Heart left ventricle (tissue), 16 donors: ENCODE measurements at regions of chr14 and their contacts with region 1.

Region 1: DNA sequence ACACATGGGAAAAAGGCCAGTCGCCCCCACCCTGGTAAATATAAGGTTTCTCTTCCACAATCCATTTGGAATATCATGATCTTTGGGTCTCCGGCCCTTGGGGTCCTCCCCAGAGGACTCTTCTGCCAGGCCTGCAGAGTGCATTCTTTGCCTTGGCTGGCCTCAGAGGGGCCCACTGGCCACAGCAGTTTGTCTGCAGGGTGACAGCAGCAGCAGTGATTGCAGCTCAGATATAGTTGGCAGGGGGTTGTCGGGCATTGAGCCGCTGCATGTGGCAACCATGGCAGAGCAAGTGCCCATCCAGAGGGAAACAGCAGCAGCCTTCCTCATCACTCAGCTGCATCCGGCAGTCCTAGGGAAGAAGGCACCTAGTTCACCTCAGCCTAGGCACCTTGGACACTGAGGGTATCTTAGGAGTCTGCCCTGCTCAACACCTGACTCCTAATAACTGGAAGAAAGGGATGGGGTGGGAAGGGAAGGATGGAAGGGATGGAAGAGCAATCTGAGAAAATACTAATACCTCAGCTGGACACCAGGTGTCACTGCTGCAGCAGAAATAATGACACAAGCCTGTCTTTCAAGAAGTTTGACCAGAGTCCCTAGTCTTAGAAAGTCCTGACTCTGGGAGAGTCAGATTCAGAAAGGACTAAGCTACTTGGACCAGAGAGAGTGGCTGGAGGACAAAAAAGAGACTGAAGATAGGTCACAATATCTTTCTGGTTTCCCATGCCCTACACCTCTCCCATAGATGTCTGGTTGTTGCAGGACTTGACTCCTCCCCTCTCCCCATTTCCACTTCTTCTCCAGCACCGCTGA is 8.9 kb downstream of the AJUBA start:
- DNase-seq: peak in 2 of 5 donors; percentile 37 to 43
- ATAC-seq: peak; percentile 5 to 57 (median 42)
- H3K4me3 ChIP-seq: no peak overlapping the region
- H3K27ac ChIP-seq: peak overlapping the region in 5 of 12 donors; percentile 5 to 55 (median 27)
- H3K4me1 ChIP-seq: peaks cover 3 to 30% (median 20%) of the 10 kb centered on the region in 12 donors
- H3K27me3 ChIP-seq: no peaks in the 10 kb centered on the region
- CTCF ChIP-seq: peak; percentile 53 to 80 (median 66)
- POLR2A ChIP-seq: no peak

Region 2: DNA sequence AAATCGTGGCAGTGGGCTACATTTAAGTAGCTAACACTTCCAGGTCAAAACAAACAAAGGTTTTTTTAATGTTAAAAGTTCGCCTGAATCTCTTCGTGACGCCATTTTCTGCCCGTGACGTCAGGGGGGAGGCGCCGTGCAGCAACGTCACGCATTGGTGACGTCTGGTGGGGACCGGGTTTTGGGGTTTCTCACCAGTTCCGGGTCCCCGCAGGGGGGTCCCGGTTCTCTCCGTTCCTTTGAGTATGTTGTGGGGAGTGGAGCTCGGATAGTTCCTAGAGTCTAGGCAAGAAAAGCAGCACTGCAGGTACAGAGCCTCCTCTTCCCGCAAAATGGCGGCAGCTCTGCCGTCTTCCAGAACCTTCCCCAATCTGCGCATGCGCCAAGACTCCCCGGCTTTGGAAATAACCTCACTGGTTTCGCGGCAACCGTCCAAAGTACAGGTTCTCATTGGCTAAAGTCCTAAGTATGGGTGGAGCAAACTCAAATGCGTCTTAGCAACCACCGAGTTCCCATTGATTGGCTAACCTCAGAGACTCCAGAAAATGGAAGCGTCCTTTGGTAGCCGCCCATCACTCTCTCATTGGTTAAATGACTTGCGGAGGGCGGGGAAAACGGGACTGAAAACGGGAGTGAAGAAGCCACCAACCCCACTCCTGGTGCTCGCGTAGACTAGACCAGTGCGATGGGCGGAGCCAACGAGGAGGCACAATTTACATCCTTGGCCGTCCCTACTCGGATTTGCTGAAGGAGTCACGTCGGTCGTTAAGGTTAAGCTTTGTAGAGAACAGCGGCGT is 54.4 kb before region 1 on chr14 and contains the start of gene RBM23:
- intact Hi-C with region 1: no loop called
- DNase-seq: peak; percentile 100
- ATAC-seq: peak; percentile 92 to 96 (median 94)
- H3K4me3 ChIP-seq: peak within 1 kb of the TSS; percentile 55 to 94 (median 75)
- H3K27ac ChIP-seq: peak within 1 kb of the TSS; percentile 87 to 100 (median 95)
- H3K4me1 ChIP-seq: peaks cover 0 to 55% (median 24%) of the 10 kb centered on the region in 12 donors
- H3K27me3 ChIP-seq: no peaks in the 10 kb centered on the region
- CTCF ChIP-seq: no peak
- POLR2A ChIP-seq: peak; percentile 72 to 83
- total RNA-seq, gene RBM23: 35.4 to 45.0 (median 41.6) TPM

Region 3: GRCh38 chr14:22986508-22987054 is 13.2 kb after region 1 on chr14:
- intact Hi-C with region 1: loop called in 1 of 10 experiments (anchors 1 kb)
- DNase-seq: peak; percentile 82 to 88 (median 87)
- ATAC-seq: peak; percentile 35 to 52 (median 40)
- H3K4me3 ChIP-seq: no peak overlapping the region
- H3K27ac ChIP-seq: no peak overlapping the region
- H3K4me1 ChIP-seq: peaks cover 0 to 19% (median 8%) of the 10 kb centered on the region in 12 donors
- H3K27me3 ChIP-seq: peaks cover 0 to 8% (median 0%) of the 10 kb centered on the region in 9 donors
- CTCF ChIP-seq: peak; percentile 85 to 95 (median 92)
- POLR2A ChIP-seq: no peak